B cell (primary cell): ENCODE measurements at regions of chr6 and their contacts with region 1.

Region 1: DNA sequence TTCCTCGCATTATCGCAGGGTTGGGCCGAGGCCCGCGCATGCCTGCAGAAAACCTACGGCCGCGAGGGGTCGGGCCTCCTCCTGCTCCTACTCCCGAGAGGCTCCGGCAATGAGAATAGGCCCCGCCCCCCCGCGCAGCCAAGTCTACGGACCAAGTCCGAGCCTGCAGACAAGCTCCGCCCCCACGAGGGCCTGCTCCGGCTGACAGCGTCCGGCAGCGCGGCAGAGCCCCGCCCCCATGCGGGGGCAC is 3.1 kb upstream of the GPSM3 start:
- DNase-seq: no peak
- ATAC-seq: peak; percentile 83
- H3K4me3 ChIP-seq: peak overlapping the region in 4 of 5 experiments; percentile 89 to 99 (median 94)
- H3K4me3 Mint-ChIP-seq: peak overlapping the region; percentile 95
- H3K27ac ChIP-seq: peak overlapping the region; percentile 99 to 100
- H3K27ac Mint-ChIP-seq: peak overlapping the region; percentile 99
- H3K4me1 ChIP-seq: peaks cover 40 to 56% of the 10 kb centered on the region in 2 donors
- H3K4me1 Mint-ChIP-seq: peaks cover 58% of the 10 kb centered on the region
- H3K27me3 ChIP-seq: no peaks in the 10 kb centered on the region
- H3K27me3 Mint-ChIP-seq: no peaks in the 10 kb centered on the region
- CTCF ChIP-seq: peak; percentile 55

Region 2: GRCh38 chr6:31493875-31494694 is 701.5 kb before region 1 on chr6:
- CTCF ChIA-PET with region 1: no interaction called
- POLR2A ChIA-PET with region 1: no interaction called
- intact Hi-C with region 1: loop called (anchors 10 kb)
- DNase-seq: peak; percentile 89
- ATAC-seq: peak; percentile 47
- H3K4me3 ChIP-seq: peak overlapping the region; percentile 76 to 91 (median 85)
- H3K4me3 Mint-ChIP-seq: peak overlapping the region; percentile 83
- H3K27ac ChIP-seq: peak overlapping the region; percentile 74 to 80
- H3K27ac Mint-ChIP-seq: peak overlapping the region; percentile 89
- H3K4me1 ChIP-seq: peaks cover 42 to 54% of the 10 kb centered on the region in 2 donors
- H3K4me1 Mint-ChIP-seq: peaks cover 46% of the 10 kb centered on the region
- H3K27me3 ChIP-seq: no peaks in the 10 kb centered on the region
- H3K27me3 Mint-ChIP-seq: no peaks in the 10 kb centered on the region
- CTCF ChIP-seq: peak; percentile 88

Region 3: DNA sequence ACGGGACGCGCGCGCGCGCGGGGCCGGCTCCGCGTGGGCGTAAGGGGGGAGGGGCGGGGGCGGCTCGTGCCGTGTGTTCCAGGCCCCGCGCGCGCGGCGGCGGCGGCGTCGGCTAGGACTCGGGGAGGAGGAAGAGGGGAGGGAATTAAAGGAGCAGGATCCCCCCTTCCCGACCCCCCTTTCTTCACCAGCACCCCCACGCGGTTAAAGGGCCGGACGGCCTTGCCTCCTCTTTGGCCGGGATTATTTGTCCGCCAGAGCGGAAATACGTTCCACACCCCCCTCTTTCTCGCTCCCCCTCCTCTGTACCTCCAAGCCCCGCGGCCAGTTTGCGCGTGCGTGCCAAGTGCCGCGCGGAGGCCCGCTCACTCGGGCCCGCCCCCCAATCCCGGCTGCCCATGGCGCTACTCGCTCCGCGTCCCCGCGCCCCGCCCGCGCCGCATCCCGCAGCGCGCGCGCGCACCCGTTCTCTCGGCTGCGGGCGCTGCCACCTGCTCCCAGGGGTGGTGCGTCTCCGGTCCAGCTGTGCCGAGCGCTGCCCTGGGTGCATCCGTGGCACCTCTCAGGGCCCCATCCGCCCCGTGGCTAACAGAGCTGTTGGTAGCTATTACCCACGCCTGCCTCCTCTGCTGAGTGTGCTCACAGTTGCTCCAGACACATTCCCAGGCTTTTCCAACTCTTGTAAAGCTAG is 293.5 kb before region 1 on chr6 and contains the start of gene ZBTB12:
- CTCF ChIA-PET with region 1: interaction called, 5 read pairs
- POLR2A ChIA-PET with region 1: interaction called, 4 read pairs
- intact Hi-C with region 1: loop called (anchors 5 kb)
- DNase-seq: peak; percentile 93
- ATAC-seq: peak; percentile 64
- H3K4me3 ChIP-seq: peak within 1 kb of the TSS; percentile 27 to 82 (median 77)
- H3K4me3 Mint-ChIP-seq: peak within 1 kb of the TSS; percentile 94
- H3K27ac ChIP-seq: peak within 1 kb of the TSS; percentile 76 to 79
- H3K27ac Mint-ChIP-seq: peak within 1 kb of the TSS; percentile 93
- H3K4me1 ChIP-seq: peaks cover 13 to 23% of the 10 kb centered on the region in 2 donors
- H3K4me1 Mint-ChIP-seq: peaks cover 32% of the 10 kb centered on the region
- H3K27me3 ChIP-seq: no peaks in the 10 kb centered on the region
- H3K27me3 Mint-ChIP-seq: no peaks in the 10 kb centered on the region
- CTCF ChIP-seq: no peak
- total RNA-seq, gene ZBTB12: 8.1 and 8.9 TPM in 2 replicates

Region 4: GRCh38 chr6:32118782-32119628 is 76.6 kb before region 1 on chr6:
- CTCF ChIA-PET with region 1: interaction called, 8 read pairs
- POLR2A ChIA-PET with region 1: interaction called, 4 read pairs
- intact Hi-C with region 1: loop called (anchors 2 kb)
- DNase-seq: peak; percentile 77
- ATAC-seq: peak; percentile 85
- H3K4me3 ChIP-seq: no peak overlapping the region
- H3K4me3 Mint-ChIP-seq: no peak overlapping the region
- H3K27ac ChIP-seq: no peak overlapping the region
- H3K27ac Mint-ChIP-seq: no peak overlapping the region
- H3K4me1 ChIP-seq: peaks cover 0 to 3% of the 10 kb centered on the region in 2 donors
- H3K4me1 Mint-ChIP-seq: peaks cover 7% of the 10 kb centered on the region
- H3K27me3 ChIP-seq: no peaks in the 10 kb centered on the region
- H3K27me3 Mint-ChIP-seq: no peaks in the 10 kb centered on the region
- CTCF ChIP-seq: peak; percentile 95

Region 5: DNA sequence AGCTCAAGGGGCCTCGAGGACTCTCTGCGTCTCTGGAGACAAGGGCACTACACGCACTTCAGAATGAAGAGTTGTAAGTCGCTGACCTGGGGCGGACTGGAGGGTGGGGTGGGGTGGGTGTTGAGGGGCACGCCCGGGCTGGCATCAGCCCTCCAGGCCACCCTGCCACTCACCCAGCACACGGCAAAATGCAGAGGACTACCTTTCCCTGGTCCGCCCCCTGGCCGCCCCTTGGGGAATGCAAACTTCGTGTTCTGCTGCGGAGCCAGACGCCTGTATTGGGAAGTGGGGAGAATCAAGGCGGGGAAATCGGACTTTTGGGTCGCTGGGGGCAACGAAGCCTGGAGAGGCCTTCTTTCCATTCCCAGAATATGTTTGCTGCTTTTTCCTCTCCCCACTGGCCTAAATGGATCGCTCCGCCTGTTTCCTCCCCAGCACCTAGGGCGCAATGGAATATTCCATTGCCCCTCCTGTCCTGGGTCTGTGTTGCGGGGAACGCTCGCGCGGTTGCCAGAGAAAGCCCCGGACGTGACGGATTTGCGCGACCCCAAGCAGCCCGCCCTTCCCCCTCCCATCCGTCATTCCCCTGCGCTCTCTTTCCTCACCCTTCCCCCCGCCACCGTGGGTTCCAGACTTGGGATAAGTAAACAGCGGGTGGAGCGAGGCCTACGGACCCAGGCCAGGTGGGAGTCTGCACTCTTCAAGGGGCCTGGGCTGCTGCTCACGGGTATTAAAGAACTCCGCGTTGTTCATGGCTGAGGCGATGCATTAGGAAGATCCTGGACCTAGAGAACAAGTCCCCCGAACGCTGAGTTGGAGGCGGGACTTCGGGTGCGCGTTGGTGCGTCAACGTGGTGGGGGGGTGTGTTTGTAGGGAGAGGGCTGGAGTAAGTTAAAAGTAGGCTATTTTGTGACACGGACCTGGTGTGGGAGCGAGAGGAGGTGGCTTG is 41.7 kb before region 1 on chr6 and contains the start of gene PPT2:
- CTCF ChIA-PET with region 1: interaction called, 7 read pairs
- POLR2A ChIA-PET with region 1: interaction called, 6 read pairs
- intact Hi-C with region 1: loop called (anchors 1 kb)
- DNase-seq: peak; percentile 65
- ATAC-seq: peak; percentile 32
- H3K4me3 ChIP-seq: peak within 1 kb of the TSS; percentile 59 to 75 (median 68)
- H3K4me3 Mint-ChIP-seq: peak within 1 kb of the TSS; percentile 99
- H3K27ac ChIP-seq: no peak within 1 kb of the TSS
- H3K27ac Mint-ChIP-seq: peak within 1 kb of the TSS; percentile 58
- H3K4me1 ChIP-seq: peaks cover 27 to 34% of the 10 kb centered on the region in 2 donors
- H3K4me1 Mint-ChIP-seq: peaks cover 48% of the 10 kb centered on the region
- H3K27me3 ChIP-seq: peaks cover 0 to 54% (median 19%) of the 10 kb centered on the region in 4 experiments
- H3K27me3 Mint-ChIP-seq: peaks cover 35% of the 10 kb centered on the region
- CTCF ChIP-seq: no peak
- total RNA-seq, gene PPT2: 2.7 and 4.2 TPM in 2 replicates

Region 6: GRCh38 chr6:32244946-32245398 is 49.4 kb after region 1 on chr6:
- CTCF ChIA-PET with region 1: interaction called, 8 read pairs
- POLR2A ChIA-PET with region 1: no interaction called
- intact Hi-C with region 1: loop called (anchors 5 kb)
- DNase-seq: peak; percentile 87
- ATAC-seq: peak; percentile 93
- H3K4me3 ChIP-seq: peak overlapping the region in 3 of 5 experiments; percentile 8 to 40 (median 24)
- H3K4me3 Mint-ChIP-seq: peak overlapping the region; percentile 76
- H3K27ac ChIP-seq: no peak overlapping the region
- H3K27ac Mint-ChIP-seq: peak overlapping the region; percentile 33
- H3K4me1 ChIP-seq: peaks cover 8 to 16% of the 10 kb centered on the region in 2 donors
- H3K4me1 Mint-ChIP-seq: peaks cover 15% of the 10 kb centered on the region
- H3K27me3 ChIP-seq: no peaks in the 10 kb centered on the region
- H3K27me3 Mint-ChIP-seq: no peaks in the 10 kb centered on the region
- CTCF ChIP-seq: peak; percentile 90

Region 7: DNA sequence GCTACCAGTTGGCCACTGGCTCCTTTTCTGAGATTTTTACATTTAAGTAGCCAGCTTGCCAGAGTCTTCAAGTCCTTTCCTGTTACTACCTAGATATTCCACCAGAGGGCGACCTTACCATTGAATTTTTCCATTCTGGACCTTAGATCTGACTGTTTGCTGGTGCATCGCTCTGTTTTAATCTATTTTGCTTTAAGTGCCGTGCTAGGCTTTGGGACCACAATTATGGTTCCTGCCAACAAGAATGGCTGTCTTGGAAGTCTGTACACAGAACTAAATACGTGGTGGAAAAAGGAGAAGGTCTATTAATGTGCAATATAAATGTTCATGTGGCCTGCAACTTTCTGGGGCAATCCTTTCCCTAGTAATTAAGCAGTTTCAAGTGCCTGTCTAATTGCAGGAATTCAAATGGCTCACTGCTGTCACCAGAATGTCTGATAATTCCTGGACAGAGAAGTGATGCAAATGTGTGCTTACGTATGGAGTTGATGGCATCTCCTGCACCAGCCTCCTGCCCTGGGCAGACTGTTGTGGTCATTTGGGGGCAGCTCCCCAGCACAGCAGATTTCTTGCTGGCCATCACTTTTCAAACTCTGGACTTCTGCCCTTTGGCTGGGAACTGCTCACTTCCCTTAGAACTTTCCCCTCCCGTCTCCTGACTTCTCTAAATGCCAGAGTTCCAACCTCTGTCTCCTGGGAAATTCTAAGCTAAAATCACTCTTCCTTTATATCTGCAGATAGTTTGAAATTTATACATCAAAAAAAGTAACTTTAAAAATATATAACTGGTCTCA is 819.5 kb after region 1 on chr6:
- CTCF ChIA-PET with region 1: no interaction called
- POLR2A ChIA-PET with region 1: no interaction called
- intact Hi-C with region 1: no loop called
- DNase-seq: peak; percentile 92
- ATAC-seq: peak; percentile 34
- H3K4me3 ChIP-seq: peak overlapping the region in 2 of 5 experiments; percentile 16 to 40
- H3K4me3 Mint-ChIP-seq: peak overlapping the region; percentile 69
- H3K27ac ChIP-seq: peak overlapping the region; percentile 2 to 100
- H3K27ac Mint-ChIP-seq: peak overlapping the region; percentile 90
- H3K4me1 ChIP-seq: peaks cover 51 to 57% of the 10 kb centered on the region in 2 donors
- H3K4me1 Mint-ChIP-seq: peaks cover 70% of the 10 kb centered on the region
- H3K27me3 ChIP-seq: no peaks in the 10 kb centered on the region
- H3K27me3 Mint-ChIP-seq: no peaks in the 10 kb centered on the region
- CTCF ChIP-seq: peak; percentile 85